T-cell (primary cell): ENCODE measurements at regions of chr6 and their contacts with region 1.

Region 1: GRCh38 chr6:33700391-33701050 is 11.0 kb downstream of the UQCC2 start:
- DNase-seq: peak; percentile 41 to 87 (median 68)
- ATAC-seq: peak; percentile 61 to 69 (median 65)
- H3K4me3 ChIP-seq: no peak overlapping the region
- H3K4me3 Mint-ChIP-seq: no peak overlapping the region
- H3K27ac ChIP-seq: no peak overlapping the region
- H3K27ac Mint-ChIP-seq: peak overlapping the region; percentile 77 to 83
- H3K4me1 ChIP-seq: peaks cover 35 to 38% of the 10 kb centered on the region in 2 experiments
- H3K4me1 Mint-ChIP-seq: peaks cover 36 to 51% (median 41%) of the 10 kb centered on the region in 3 donors
- H3K27me3 ChIP-seq: no peaks in the 10 kb centered on the region
- H3K27me3 Mint-ChIP-seq: no peaks in the 10 kb centered on the region

Region 2: GRCh38 chr6:33711140-33712129 is 10.9 kb after region 1 on chr6 and contains the start of gene UQCC2:
- CTCF ChIA-PET with region 1: interaction called in 1 of 2 experiments, 13 read pairs
- POLR2A ChIA-PET with region 1: interaction called in 1 of 2 experiments, 3 read pairs
- DNase-seq: peak; percentile 93 to 100 (median 96)
- ATAC-seq: peak; percentile 94 to 96 (median 94)
- H3K4me3 ChIP-seq: peak within 1 kb of the TSS; percentile 87 to 95
- H3K4me3 Mint-ChIP-seq: peak within 1 kb of the TSS; percentile 96 to 98 (median 98)
- H3K27ac ChIP-seq: peak within 1 kb of the TSS; percentile 66
- H3K27ac Mint-ChIP-seq: peak within 1 kb of the TSS; percentile 95 to 98
- H3K4me1 ChIP-seq: peaks cover 15 to 22% of the 10 kb centered on the region in 2 experiments
- H3K4me1 Mint-ChIP-seq: peaks cover 25 to 35% (median 27%) of the 10 kb centered on the region in 3 donors
- H3K27me3 ChIP-seq: no peaks in the 10 kb centered on the region
- H3K27me3 Mint-ChIP-seq: no peaks in the 10 kb centered on the region
- total RNA-seq, gene UQCC2: 17.2 to 36.2 (median 32.7) TPM